Activated T-helper 2 cell treated with anti-CD3 and anti-CD28 coated beads, Interferon-gamma antibody, Interleukin-2, Interleukin-4, amounts not matched to agents 10 μg/mL and 5 μg/mL and 100 μg/mL, durations not matched to agents 14 hours and 24 hours and 36 hours (primary cell): ENCODE measurements at regions of chr7 and their contacts with region 1.

Region 1: GRCh38 chr7:157386979-157387800 is 50.4 kb downstream of the DNAJB6 start:
- DNase-seq: peak; percentile 79
- H3K4me3 Mint-ChIP-seq: no peak overlapping the region
- H3K27ac Mint-ChIP-seq: peak overlapping the region; percentile 55
- H3K4me1 Mint-ChIP-seq: peaks cover 37% of the 10 kb centered on the region
- H3K27me3 Mint-ChIP-seq: no peaks in the 10 kb centered on the region

Region 2: GRCh38 chr7:157089100-157089610 is 298.0 kb before region 1 on chr7:
- intact Hi-C with region 1: no loop called
- DNase-seq: no peak
- H3K4me3 Mint-ChIP-seq: no peak overlapping the region
- H3K27ac Mint-ChIP-seq: no peak overlapping the region
- H3K4me1 Mint-ChIP-seq: no peaks in the 10 kb centered on the region
- H3K27me3 Mint-ChIP-seq: no peaks in the 10 kb centered on the region

Region 3: DNA sequence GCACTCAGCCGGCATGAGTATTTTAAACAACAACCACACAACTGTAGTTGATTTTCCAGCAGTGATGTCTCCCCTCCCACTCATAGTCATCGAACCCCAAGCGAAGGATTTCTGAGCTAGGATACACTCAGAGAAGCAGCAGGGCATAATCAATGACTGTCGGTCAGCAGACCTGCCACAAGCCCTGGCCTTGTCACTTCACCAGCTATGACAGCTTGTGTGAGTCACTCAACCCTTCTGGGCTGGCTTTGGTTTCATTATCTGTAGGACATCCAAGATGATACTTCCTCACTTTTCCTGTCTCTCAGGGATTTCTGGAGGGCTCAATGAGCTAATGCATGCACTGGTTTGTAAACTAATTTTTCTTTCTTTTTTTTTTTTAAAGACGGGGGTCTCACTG is 270.4 kb before region 1 on chr7:
- intact Hi-C with region 1: no loop called
- DNase-seq: no peak
- H3K4me3 Mint-ChIP-seq: no peak overlapping the region
- H3K27ac Mint-ChIP-seq: no peak overlapping the region
- H3K4me1 Mint-ChIP-seq: no peaks in the 10 kb centered on the region
- H3K27me3 Mint-ChIP-seq: no peaks in the 10 kb centered on the region

Region 4: DNA sequence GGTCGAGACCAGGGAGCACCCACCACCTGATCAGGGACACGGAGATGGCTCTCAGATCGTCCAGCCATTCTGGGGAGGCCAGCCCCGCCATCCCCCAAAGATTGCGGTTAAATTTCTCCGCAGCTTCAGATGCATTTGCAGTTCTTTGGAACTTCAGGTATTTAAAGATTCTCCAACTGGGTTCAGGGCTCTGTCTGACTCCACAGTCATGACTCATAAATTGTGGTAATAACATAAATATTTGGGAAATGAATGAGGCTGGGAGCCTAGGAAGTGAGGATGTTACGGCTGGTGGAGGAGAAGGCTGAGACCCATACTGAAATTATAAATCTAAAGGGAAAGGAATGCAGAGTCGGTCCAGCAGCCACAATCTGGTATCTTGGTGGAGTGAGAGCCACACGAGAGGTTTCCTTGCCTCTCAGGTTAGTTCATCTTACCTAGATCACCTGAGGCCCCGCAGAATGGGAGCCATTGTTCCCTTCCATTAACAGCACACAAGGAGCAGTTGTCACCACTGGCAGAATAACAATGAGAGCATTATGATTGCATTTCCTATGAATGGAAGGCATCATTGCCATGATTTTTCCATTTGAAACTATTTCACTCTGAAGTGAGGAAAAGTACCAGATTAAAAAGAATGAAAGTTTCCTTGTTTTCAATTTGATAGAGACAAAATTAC is 77.1 kb before region 1 on chr7:
- intact Hi-C with region 1: loop called (anchors 5 kb)
- DNase-seq: no peak
- H3K4me3 Mint-ChIP-seq: no peak overlapping the region
- H3K27ac Mint-ChIP-seq: no peak overlapping the region
- H3K4me1 Mint-ChIP-seq: peaks cover 24% of the 10 kb centered on the region
- H3K27me3 Mint-ChIP-seq: no peaks in the 10 kb centered on the region

Region 5: GRCh38 chr7:157372235-157373232 is 14.7 kb before region 1 on chr7:
- intact Hi-C with region 1: no loop called
- DNase-seq: no peak
- H3K4me3 Mint-ChIP-seq: no peak overlapping the region
- H3K27ac Mint-ChIP-seq: peak overlapping the region; percentile 59
- H3K4me1 Mint-ChIP-seq: peaks cover 34% of the 10 kb centered on the region
- H3K27me3 Mint-ChIP-seq: no peaks in the 10 kb centered on the region

Region 6: DNA sequence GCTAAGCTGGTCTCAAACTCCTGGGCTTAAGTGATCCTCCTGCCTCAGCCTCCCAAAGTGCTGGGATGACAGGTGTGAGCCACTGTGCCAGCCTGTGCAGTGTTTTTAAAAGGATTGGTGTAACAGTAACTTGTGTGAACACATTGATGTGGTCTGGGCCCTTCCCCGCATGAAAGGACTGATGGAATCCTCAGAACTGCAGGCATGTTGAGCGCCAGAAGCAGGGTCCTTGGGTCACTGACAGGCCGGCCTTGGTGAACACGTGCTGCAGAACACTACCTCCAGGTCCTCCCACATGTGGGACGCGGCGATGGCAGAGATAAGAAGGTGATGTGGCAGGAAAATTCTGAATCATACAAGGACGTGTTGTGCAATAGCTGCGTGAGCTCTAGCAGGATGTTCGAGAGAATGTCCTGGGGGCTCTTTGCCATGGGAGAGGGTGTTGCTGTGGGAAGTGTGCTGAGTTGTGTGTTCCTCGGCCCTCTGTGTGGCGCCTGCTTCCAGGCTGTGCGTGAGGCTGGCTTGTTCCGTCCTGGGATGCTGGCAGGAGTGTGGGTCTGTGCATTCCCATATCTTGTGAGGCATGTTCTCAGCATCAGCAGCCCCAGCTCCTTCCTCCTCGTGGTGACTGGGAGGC is 17.8 kb after region 1 on chr7:
- intact Hi-C with region 1: loop called (anchors 2 kb)
- DNase-seq: peak; percentile 14
- H3K4me3 Mint-ChIP-seq: no peak overlapping the region
- H3K27ac Mint-ChIP-seq: no peak overlapping the region
- H3K4me1 Mint-ChIP-seq: peaks cover 11% of the 10 kb centered on the region
- H3K27me3 Mint-ChIP-seq: no peaks in the 10 kb centered on the region